Activated CD4-positive, alpha-beta T cell treated with anti-CD3 and anti-CD28 coated beads for 36 hours (primary cell): ENCODE measurements at regions of chr16 and their contacts with region 1.

Region 1: GRCh38 chr16:74666425-74667254 is at the start of gene RFWD3:
- DNase-seq: peak; percentile 98
- ATAC-seq: peak; percentile 100
- H3K4me3 Mint-ChIP-seq: peak within 1 kb of the TSS; percentile 83
- H3K27ac Mint-ChIP-seq: peak within 1 kb of the TSS; percentile 97
- H3K4me1 Mint-ChIP-seq: peaks cover 42% of the 10 kb centered on the region
- H3K27me3 Mint-ChIP-seq: no peaks in the 10 kb centered on the region
- total RNA-seq, gene RFWD3: 92.7 to 102 TPM

Region 2: GRCh38 chr16:74296432-74297144 is 370.1 kb before region 1 on chr16 and contains the start of gene PSMD7:
- CTCF ChIA-PET with region 1: interaction called, 3 read pairs
- POLR2A ChIA-PET with region 1: interaction called, 5 read pairs
- intact Hi-C with region 1: loop called in 1 of 2 experiments (anchors 1 kb)
- DNase-seq: peak; percentile 95
- ATAC-seq: peak; percentile 91
- H3K4me3 Mint-ChIP-seq: peak within 1 kb of the TSS; percentile 98
- H3K27ac Mint-ChIP-seq: peak within 1 kb of the TSS; percentile 99
- H3K4me1 Mint-ChIP-seq: peaks cover 34% of the 10 kb centered on the region
- H3K27me3 Mint-ChIP-seq: no peaks in the 10 kb centered on the region
- total RNA-seq, gene PSMD7: 122 to 134 TPM

Region 3: GRCh38 chr16:74372953-74373846 is 293.4 kb before region 1 on chr16:
- CTCF ChIA-PET with region 1: no interaction called
- POLR2A ChIA-PET with region 1: no interaction called
- intact Hi-C with region 1: loop called in 1 of 2 experiments (anchors 1 kb)
- DNase-seq: no peak
- ATAC-seq: no peak
- H3K4me3 Mint-ChIP-seq: no peak overlapping the region
- H3K27ac Mint-ChIP-seq: no peak overlapping the region
- H3K4me1 Mint-ChIP-seq: no peaks in the 10 kb centered on the region
- H3K27me3 Mint-ChIP-seq: no peaks in the 10 kb centered on the region

Region 4: DNA sequence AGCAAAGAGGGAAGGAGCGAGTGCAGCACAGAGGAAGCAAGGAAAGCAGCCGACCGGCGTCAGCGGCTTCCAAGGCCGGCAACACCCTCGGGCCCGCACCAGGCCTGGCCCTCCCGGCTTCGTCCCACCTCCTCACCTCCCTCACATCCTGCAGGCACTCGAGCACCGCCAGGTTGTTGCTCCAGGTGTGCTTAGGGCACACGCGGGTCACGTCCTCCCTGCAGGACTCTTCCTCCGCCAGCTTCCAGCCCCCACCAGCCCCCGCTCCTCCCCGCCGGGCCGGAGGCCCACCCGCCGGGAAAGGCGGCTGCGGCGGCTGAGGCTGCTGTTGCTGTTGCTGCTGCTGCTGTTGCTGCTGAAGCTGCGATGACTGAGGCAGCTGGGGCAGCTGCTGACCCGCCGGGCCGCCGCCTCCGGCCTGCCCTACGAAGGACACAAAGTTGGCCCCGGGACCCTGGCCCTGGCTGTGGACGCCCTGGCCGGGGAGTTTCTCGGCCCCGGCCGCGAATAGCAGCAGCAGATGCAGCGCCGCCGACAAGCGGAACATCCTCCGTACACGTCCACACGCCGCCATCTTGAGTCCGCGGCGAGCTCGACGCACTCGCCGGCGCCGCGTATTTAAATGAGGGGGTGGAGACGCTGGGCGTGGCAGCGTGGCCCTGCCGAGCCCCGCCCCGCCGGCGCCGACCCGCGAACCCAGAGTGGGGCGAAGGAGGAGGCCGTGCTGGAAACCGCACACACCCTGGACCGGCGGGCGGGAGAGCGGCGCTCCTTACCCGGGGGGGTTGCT is 59.9 kb before region 1 on chr16 and contains the start of gene GLG1:
- CTCF ChIA-PET with region 1: no interaction called
- POLR2A ChIA-PET with region 1: interaction called, 12 read pairs
- intact Hi-C with region 1: loop called (anchors 1 to 2 kb)
- DNase-seq: peak; percentile 95
- ATAC-seq: peak; percentile 87
- H3K4me3 Mint-ChIP-seq: peak within 1 kb of the TSS; percentile 87
- H3K27ac Mint-ChIP-seq: peak within 1 kb of the TSS; percentile 93
- H3K4me1 Mint-ChIP-seq: peaks cover 57% of the 10 kb centered on the region
- H3K27me3 Mint-ChIP-seq: no peaks in the 10 kb centered on the region
- total RNA-seq, gene GLG1: 66.3 to 68.3 TPM

Region 5: DNA sequence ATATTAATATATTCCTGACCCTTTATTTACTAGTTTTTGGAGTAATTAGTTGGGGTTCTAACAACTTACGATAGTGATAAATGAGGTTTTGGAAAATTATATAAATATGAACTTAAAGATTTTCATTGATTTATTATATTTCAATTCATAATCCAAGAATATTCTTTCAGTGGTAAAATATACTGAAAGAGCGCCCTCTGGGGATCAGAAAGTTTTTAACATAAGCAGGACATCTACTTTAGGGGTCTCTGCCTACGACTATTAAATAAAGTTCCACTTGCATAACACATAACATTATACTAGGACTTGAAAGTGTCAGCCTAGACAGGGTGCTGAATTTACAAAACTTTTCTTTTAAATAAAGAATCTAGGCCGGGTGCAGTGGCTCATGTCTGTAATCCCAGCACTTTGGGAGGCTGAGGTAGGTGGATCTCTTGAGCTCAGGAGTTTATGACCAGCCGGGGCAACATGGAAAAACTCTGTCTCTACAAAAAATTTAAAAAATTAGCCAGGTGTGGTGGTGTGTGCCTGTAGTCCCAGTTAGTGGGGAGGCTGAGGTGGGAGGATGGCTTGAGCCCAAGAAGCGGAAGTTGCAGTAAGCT is 15.6 kb before region 1 on chr16:
- CTCF ChIA-PET with region 1: interaction called, 6 read pairs
- POLR2A ChIA-PET with region 1: interaction called, 28 read pairs
- intact Hi-C with region 1: no loop called
- DNase-seq: no peak
- ATAC-seq: no peak
- H3K4me3 Mint-ChIP-seq: no peak overlapping the region
- H3K27ac Mint-ChIP-seq: no peak overlapping the region
- H3K4me1 Mint-ChIP-seq: peaks cover 22% of the 10 kb centered on the region
- H3K27me3 Mint-ChIP-seq: no peaks in the 10 kb centered on the region

Region 6: GRCh38 chr16:74726716-74727115 is 60.1 kb after region 1 on chr16:
- CTCF ChIA-PET with region 1: interaction called, 3 read pairs
- POLR2A ChIA-PET with region 1: no interaction called
- intact Hi-C with region 1: loop called in 1 of 2 experiments (anchors 1 kb)
- DNase-seq: peak; percentile 70
- ATAC-seq: peak; percentile 65
- H3K4me3 Mint-ChIP-seq: no peak overlapping the region
- H3K27ac Mint-ChIP-seq: no peak overlapping the region
- H3K4me1 Mint-ChIP-seq: peaks cover 12% of the 10 kb centered on the region
- H3K27me3 Mint-ChIP-seq: no peaks in the 10 kb centered on the region

Region 7: GRCh38 chr16:75432828-75433731 is 766.4 kb after region 1 on chr16 and contains the start of gene CFDP1:
- CTCF ChIA-PET with region 1: no interaction called
- POLR2A ChIA-PET with region 1: no interaction called
- intact Hi-C with region 1: loop called in 1 of 2 experiments (anchors 1 kb)
- DNase-seq: peak; percentile 97
- ATAC-seq: peak; percentile 94
- H3K4me3 Mint-ChIP-seq: peak within 1 kb of the TSS; percentile 92
- H3K27ac Mint-ChIP-seq: peak within 1 kb of the TSS; percentile 95
- H3K4me1 Mint-ChIP-seq: peaks cover 39% of the 10 kb centered on the region
- H3K27me3 Mint-ChIP-seq: no peaks in the 10 kb centered on the region
- total RNA-seq, gene CFDP1: 44.0 to 48.2 TPM